Activated B cell treated with CpG ODN at 0.5 μM for 24 hours (primary cell): ENCODE measurements at regions of chr15 and their contacts with region 1.

Region 1: GRCh38 chr15:75136118-75136517 is 65.6 kb upstream of the C15orf39 start:
- DNase-seq: no peak
- ATAC-seq: no peak
- H3K4me3 Mint-ChIP-seq: no peak overlapping the region
- H3K27ac Mint-ChIP-seq: no peak overlapping the region
- H3K4me1 Mint-ChIP-seq: peaks cover 13% of the 10 kb centered on the region
- H3K27me3 Mint-ChIP-seq: no peaks in the 10 kb centered on the region
- CTCF ChIP-seq: no peak

Region 2: DNA sequence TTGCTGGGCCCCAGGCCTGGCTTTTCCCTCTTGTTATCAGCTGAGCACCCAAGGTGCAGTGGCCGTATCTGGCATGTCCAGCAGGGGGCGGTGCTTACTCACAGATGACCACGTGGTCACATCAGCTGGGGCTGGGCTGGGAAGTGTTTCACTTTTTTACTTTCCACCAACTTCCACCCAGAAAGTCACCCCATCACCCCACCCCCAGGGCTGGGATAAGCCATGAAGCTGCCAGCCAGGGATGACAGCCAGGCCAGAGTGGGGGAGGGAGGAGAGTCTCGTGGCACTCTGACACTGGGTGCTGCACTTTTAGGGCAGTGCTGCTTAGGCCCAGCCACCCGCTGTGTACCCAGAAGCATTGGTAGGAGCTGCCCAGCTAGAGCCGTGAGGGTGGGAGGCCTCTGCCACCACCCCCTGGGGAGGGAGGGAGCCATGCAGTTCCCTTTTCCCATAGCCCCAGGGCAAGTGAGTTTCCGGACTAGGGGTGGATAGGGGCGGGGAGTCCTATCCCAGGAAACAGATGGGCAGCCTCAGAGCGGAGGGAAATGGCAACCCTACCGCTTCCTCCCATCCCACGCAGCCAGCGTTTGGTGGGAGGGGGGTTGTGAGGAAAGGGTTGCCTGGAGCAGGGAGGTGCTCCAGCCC is 106.6 kb before region 1 on chr15:
- CTCF ChIA-PET with region 1: no interaction called
- POLR2A ChIA-PET with region 1: no interaction called
- intact Hi-C with region 1: no loop called
- DNase-seq: peak; percentile 82
- ATAC-seq: peak; percentile 95
- H3K4me3 Mint-ChIP-seq: peak overlapping the region; percentile 61
- H3K27ac Mint-ChIP-seq: no peak overlapping the region
- H3K4me1 Mint-ChIP-seq: peaks cover 20% of the 10 kb centered on the region
- H3K27me3 Mint-ChIP-seq: no peaks in the 10 kb centered on the region
- CTCF ChIP-seq: no peak

Region 3: GRCh38 chr15:75153087-75153486 is 17.0 kb after region 1 on chr15:
- CTCF ChIA-PET with region 1: no interaction called
- POLR2A ChIA-PET with region 1: interaction called, 4 read pairs
- intact Hi-C with region 1: loop called (anchors 2 kb)
- DNase-seq: no peak
- ATAC-seq: peak; percentile 25
- H3K4me3 Mint-ChIP-seq: no peak overlapping the region
- H3K27ac Mint-ChIP-seq: no peak overlapping the region
- H3K4me1 Mint-ChIP-seq: peaks cover 11% of the 10 kb centered on the region
- H3K27me3 Mint-ChIP-seq: peaks cover 8% of the 10 kb centered on the region
- CTCF ChIP-seq: no peak